ENCODE measurements at regions of chr4 and their contacts with region 1.

Region 1: DNA sequence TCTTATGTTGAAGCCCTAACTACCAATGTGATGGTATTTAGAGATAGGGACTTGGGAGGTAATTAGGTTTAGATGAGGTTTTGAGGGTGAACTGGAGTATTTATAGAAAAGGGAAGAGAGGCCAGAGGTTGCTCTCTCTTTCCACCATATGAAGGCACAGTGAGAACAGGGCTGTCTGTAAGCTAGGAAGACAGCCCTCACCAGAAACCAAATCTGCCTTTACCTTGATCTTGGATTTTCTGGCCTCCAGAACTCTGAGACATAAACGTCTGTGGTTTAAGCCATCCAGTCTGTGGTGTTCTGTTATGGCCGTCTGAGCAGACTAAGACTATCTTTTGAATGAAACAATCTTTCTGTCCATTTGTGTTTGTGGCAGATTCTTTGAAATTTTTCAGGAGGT is 223.7 kb downstream of the PDHA2 start:
- DNase-seq: no peak
- ATAC-seq: no peak
- H3K4me3 ChIP-seq: no peak overlapping the region
- H3K27ac ChIP-seq: no peak overlapping the region
- H3K4me1 ChIP-seq: no peaks in the 10 kb centered on the region
- H3K27me3 ChIP-seq: no peaks in the 10 kb centered on the region
- CTCF ChIP-seq: no peak

Region 2: GRCh38 chr4:96025011-96025410 is 38.6 kb before region 1 on chr4:
- intact Hi-C with region 1: loop called in 1 of 10 experiments (anchors 2 kb)
- DNase-seq: no peak
- ATAC-seq: no peak
- H3K4me3 ChIP-seq: no peak overlapping the region
- H3K27ac ChIP-seq: no peak overlapping the region
- H3K4me1 ChIP-seq: no peaks in the 10 kb centered on the region
- H3K27me3 ChIP-seq: no peaks in the 10 kb centered on the region
- CTCF ChIP-seq: no peak

Region 3: DNA sequence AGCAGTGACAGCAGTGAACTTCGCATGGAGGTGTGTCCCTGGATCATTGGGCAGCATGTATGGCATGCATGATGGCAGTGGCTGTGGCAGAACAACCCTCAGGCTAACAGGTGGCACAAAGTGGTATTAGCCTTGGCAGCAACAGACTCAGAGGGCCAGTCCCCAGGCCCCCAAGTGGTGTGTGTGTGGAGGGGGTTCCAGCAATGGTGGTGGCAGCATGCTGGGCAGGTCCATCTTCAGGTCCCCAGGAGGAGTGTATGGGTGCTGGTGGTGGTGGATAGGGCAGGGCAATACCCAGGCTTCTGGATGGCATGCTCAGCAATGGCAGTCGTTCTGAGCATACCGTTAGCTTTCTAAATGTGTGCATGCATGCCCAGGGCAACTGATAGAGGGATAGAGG is 699.9 kb after region 1 on chr4:
- intact Hi-C with region 1: no loop called
- DNase-seq: no peak
- ATAC-seq: no peak
- H3K4me3 ChIP-seq: no peak overlapping the region
- H3K27ac ChIP-seq: no peak overlapping the region
- H3K4me1 ChIP-seq: no peaks in the 10 kb centered on the region
- H3K27me3 ChIP-seq: no peaks in the 10 kb centered on the region
- CTCF ChIP-seq: no peak